ENCODE measurements at regions of chr5 and their contacts with region 1.

Region 1: DNA sequence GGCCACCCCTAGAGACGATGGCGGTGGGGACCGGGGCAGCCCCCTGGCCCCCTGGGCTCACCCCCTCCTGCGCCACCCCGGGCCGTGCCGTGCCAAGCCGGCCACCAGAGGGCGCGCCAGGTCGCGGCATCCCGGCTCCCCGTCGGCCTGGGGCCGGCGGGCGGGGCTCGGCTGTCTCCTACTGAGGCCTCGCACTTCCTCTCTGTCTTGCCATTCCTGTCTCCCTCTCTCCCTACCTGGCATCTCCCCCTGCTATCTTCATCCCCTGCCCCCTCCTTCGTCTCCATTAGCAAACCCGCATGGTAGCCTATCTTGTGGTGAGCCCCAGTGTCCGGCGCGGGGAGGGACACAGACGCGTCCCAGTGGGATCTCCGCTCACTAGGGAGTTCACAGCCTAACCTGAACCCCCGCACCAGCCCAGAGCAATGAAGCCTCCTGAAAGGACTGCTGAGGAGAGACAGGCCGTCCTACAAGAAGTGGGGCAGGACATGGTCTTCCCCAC is 29.8 kb upstream of the FABP6 start:
- DNase-seq: peak; percentile 81 to 93
- ATAC-seq: peak; percentile 93
- H3K4me3 ChIP-seq: no peak overlapping the region
- H3K27ac ChIP-seq: no peak overlapping the region
- H3K4me1 ChIP-seq: no peaks in the 10 kb centered on the region
- H3K27me3 ChIP-seq: no peaks in the 10 kb centered on the region

Region 2: DNA sequence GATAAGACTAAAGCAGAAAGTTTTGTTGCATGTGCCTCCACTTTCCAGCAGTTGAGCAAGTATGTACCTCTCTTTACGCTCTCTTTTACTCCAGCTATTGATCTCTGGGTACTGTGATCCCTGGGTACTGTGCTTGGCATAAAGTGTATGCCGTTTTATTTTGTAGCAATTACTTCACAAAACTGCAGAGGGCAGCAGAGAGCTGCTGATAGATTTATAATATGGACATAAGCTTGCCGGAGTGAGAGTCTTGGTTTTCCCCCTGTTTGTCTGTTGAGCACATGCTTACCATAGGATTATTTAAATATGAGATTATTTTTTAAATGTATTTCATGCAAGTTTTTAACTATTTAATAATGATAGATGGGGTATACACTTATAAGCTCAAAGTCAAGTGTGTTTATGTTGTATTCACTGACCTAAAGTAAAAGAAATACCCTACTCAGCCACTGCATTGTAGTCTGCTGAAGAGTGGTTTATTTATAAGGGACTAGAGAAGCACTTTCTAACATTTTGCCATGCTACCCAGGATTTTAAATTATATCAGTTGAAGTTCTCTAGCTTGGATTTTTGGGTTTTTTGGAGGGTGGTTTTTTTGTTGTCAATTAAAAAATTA is 177.5 kb before region 1 on chr5:
- intact Hi-C with region 1: loop called (anchors 5 kb)
- DNase-seq: no peak
- ATAC-seq: peak; percentile 90
- H3K4me3 ChIP-seq: no peak overlapping the region
- H3K27ac ChIP-seq: no peak overlapping the region
- H3K4me1 ChIP-seq: no peaks in the 10 kb centered on the region
- H3K27me3 ChIP-seq: no peaks in the 10 kb centered on the region

Region 3: GRCh38 chr5:160029004-160029403 is 170.5 kb before region 1 on chr5:
- intact Hi-C with region 1: loop called (anchors 5 kb)
- DNase-seq: no peak
- ATAC-seq: no peak
- H3K4me3 ChIP-seq: no peak overlapping the region
- H3K27ac ChIP-seq: no peak overlapping the region
- H3K4me1 ChIP-seq: no peaks in the 10 kb centered on the region
- H3K27me3 ChIP-seq: no peaks in the 10 kb centered on the region

Region 4: DNA sequence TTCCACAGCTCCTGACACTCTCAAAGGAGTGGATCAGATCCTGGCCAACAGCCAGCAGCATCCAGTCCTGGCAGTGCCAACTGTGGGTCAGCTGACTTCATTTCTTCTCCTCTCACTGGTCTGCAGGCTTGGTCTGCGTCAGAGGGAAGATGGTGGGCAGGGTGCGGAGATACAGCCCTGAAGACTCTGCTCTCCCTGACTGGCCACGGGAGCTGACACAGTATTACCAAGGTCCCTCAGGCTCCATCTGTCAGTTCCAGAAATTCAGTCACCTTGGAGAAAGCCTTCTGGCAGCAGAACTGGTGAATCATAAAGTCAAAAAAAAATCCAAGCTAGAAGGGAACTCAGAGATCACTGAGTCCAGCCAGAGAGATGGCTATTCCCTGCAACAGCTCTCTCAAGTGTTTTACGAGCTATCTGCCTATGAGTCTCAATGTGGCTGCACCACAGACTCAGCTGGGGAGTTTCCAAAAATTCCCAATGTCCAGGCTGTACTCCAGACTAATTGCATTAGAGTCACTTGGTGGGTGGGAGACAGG is 143.0 kb after region 1 on chr5:
- intact Hi-C with region 1: loop called (anchors 2 kb)
- DNase-seq: no peak
- ATAC-seq: peak; percentile 22
- H3K4me3 ChIP-seq: no peak overlapping the region
- H3K27ac ChIP-seq: no peak overlapping the region
- H3K4me1 ChIP-seq: no peaks in the 10 kb centered on the region
- H3K27me3 ChIP-seq: no peaks in the 10 kb centered on the region

Region 5: GRCh38 chr5:160385496-160385895 is 186.0 kb after region 1 on chr5:
- intact Hi-C with region 1: loop called (anchors 2 to 5 kb)
- DNase-seq: no peak
- ATAC-seq: no peak
- H3K4me3 ChIP-seq: no peak overlapping the region
- H3K27ac ChIP-seq: no peak overlapping the region
- H3K4me1 ChIP-seq: no peaks in the 10 kb centered on the region
- H3K27me3 ChIP-seq: no peaks in the 10 kb centered on the region

Region 6: DNA sequence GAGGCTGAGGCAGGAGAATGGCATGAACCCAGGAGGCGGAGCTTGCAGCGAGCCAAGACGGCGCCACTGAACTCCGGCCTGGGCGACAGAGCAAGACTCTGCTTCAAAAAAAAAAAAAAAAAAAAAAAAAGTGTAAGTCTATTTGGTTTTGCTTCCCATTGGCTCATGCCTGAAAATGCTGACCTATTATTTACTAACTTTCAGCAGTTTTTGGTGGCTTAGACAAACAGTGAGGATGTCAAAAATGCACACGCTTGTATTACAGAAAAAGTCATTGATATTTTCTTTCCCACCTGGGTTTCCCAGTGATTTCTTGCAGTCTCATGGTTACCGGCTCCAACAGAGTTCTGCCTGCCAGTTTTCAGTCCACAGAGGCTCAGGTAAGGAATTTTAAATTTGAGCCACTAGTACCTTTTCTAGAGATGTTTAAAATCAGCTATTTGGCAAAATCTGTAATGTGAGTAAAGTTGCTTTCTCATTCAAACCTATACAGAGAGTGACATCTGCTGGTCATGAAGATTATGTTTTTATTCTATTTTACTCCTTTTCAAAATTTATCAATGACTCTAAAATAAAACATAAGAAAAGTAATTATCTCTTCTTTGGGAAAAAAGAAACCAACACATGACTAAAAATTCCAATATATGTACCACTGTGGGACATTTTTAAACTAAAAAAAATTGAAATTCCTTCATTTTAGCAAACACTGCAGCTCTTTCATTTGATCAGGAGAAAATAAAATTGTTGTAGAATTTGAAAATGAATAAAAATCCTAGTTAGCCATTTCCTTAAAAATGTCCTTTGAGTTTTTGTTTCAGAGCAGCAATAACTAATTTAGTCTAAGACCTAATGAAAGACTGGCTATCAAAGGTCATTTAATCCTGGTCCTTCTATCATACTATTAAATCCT is 191.6 kb after region 1 on chr5:
- intact Hi-C with region 1: loop called (anchors 2 to 5 kb)
- DNase-seq: no peak
- ATAC-seq: no peak
- H3K4me3 ChIP-seq: no peak overlapping the region
- H3K27ac ChIP-seq: no peak overlapping the region
- H3K4me1 ChIP-seq: peaks cover 0 to under 1% of the 10 kb centered on the region in 2 donors
- H3K27me3 ChIP-seq: no peaks in the 10 kb centered on the region

Measured in aorta (tissue), 5 donors.